ENCODE measurements at regions of chr10 and their contacts with region 1.

Region 1: DNA sequence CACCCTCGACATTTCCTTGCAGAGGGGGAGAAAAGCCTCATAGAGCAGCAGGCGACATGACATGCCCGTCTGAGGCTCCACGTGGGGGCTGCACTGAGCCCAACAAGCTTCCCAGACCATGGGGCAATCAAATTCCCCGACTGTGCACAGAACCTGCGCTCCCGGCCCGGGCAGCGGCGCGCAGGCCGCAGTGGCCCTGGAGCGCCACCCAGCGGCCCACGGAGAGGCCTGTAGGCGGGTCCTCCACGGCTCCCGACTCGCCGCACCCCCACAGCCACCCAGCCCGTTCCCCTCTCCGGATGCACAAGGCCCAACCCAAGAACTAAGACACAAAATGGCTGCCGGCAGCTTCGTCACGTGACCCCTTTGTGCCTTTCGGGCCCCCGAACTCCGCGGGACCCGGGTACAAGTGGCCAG is 816 bp downstream of the EPC1 start:
- DNase-seq: peak; percentile 71
- H3K4me3 ChIP-seq: peak overlapping the region; percentile 93
- H3K27me3 ChIP-seq: no peaks in the 10 kb centered on the region
- CTCF ChIP-seq: peak; percentile 81

Region 2: GRCh38 chr10:32315424-32315823 is 30.7 kb before region 1 on chr10:
- CTCF ChIA-PET with region 1: interaction called, 18 read pairs
- POLR2A ChIA-PET with region 1: no interaction called
- DNase-seq: no peak
- H3K4me3 ChIP-seq: no peak overlapping the region
- H3K27me3 ChIP-seq: no peaks in the 10 kb centered on the region
- CTCF ChIP-seq: no peak

Region 3: DNA sequence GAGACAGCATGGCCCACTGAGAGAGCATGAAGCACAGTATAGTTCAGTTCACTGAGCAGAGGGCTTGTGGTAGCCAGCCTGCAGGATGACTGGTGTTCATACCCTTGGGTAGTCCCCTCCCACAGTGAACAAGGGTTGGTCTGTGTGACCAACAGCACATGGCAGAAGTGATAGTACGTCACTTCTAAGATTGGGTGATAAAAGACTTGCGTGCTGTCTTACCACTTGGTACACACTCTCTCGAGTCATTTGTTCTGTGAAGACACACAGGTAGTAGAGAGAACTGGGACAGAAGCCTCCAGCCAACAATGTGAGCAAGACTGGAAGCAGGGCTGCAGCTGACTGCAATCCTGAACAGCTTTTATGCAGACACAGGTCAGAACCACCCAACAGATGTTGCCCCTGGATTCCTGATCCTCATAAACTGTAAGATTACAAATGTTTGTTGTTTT is 13.8 kb before region 1 on chr10:
- CTCF ChIA-PET with region 1: interaction called, 21 read pairs
- POLR2A ChIA-PET with region 1: interaction called, 3 read pairs
- DNase-seq: peak; percentile 6
- H3K4me3 ChIP-seq: no peak overlapping the region
- H3K27me3 ChIP-seq: no peaks in the 10 kb centered on the region
- CTCF ChIP-seq: no peak

Region 4: GRCh38 chr10:32538256-32538655 is 192.1 kb after region 1 on chr10:
- CTCF ChIA-PET with region 1: no interaction called
- POLR2A ChIA-PET with region 1: no interaction called
- DNase-seq: no peak
- H3K4me3 ChIP-seq: no peak overlapping the region
- H3K27me3 ChIP-seq: no peaks in the 10 kb centered on the region
- CTCF ChIP-seq: no peak

Measured in BJ (cell line).